CD8-positive, alpha-beta memory T cell (primary cell): ENCODE measurements at regions of chr13 and their contacts with region 1.

Region 1: DNA sequence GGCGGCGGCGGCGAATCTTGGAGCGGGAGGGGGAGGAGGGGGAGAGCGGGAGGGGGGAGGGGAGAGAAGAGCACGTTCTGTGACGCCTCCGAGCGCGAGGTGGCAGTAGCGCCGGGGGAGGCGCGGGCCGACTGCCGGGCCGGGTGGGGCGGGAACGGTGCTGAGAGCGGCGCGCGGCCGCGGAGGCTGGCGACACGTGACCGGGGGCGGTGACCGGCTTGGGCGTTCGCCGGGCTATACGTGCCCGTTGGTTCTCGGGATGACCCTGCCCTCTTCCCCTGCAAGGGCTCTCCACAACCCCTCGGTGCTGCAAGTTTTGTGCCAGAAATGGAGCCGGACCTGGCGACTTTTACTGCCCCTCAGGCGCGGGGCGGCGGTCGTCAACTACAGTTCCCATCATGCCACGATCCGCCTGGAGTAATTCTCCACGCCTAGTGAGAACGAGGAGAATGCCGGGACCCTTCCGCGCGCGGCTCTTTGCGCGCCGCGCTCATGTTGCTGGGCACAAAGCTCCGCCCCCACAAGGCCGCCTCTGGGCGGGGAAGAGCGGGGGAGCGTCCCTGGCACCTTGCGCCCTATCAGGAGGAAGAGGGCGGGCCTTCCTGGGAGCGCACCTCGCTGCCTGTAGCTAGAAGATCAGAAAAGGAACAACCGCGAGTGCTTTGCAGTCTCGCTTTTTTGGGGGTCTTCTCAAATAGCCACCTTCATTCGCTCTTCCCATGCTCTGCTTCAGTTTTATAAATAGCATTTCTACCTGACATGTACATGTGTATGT is at the start of gene KPNA3:
- DNase-seq: peak; percentile 91 to 97 (median 93)
- H3K4me3 ChIP-seq: peak within 1 kb of the TSS; percentile 91
- H3K4me3 Mint-ChIP-seq: peak within 1 kb of the TSS; percentile 96 to 99 (median 98)
- H3K27ac ChIP-seq: peak within 1 kb of the TSS; percentile 75
- H3K27ac Mint-ChIP-seq: peak within 1 kb of the TSS; percentile 95 to 99 (median 97)
- H3K4me1 ChIP-seq: peaks cover 34% of the 10 kb centered on the region
- H3K4me1 Mint-ChIP-seq: peaks cover 33 to 40% (median 38%) of the 10 kb centered on the region in 3 donors
- H3K27me3 ChIP-seq: no peaks in the 10 kb centered on the region
- H3K27me3 Mint-ChIP-seq: no peaks in the 10 kb centered on the region
- total RNA-seq, gene KPNA3: 62.7 to 62.8 TPM

Region 2: GRCh38 chr13:49690992-49691886 is 101.5 kb before region 1 on chr13 and contains the start of gene EBPL:
- CTCF ChIA-PET with region 1: interaction called, 8 read pairs
- POLR2A ChIA-PET with region 1: interaction called, 11 read pairs
- DNase-seq: peak; percentile 73 to 89 (median 80)
- H3K4me3 ChIP-seq: peak within 1 kb of the TSS; percentile 82
- H3K4me3 Mint-ChIP-seq: peak within 1 kb of the TSS; percentile 88 to 93 (median 91)
- H3K27ac ChIP-seq: peak within 1 kb of the TSS; percentile 26
- H3K27ac Mint-ChIP-seq: peak within 1 kb of the TSS; percentile 45 to 91 (median 76)
- H3K4me1 ChIP-seq: peaks cover 13% of the 10 kb centered on the region
- H3K4me1 Mint-ChIP-seq: peaks cover 28 to 40% (median 34%) of the 10 kb centered on the region in 3 donors
- H3K27me3 ChIP-seq: no peaks in the 10 kb centered on the region
- H3K27me3 Mint-ChIP-seq: no peaks in the 10 kb centered on the region
- total RNA-seq, gene EBPL: 47.9 to 51.6 TPM

Region 3: GRCh38 chr13:49731766-49732165 is 61.0 kb before region 1 on chr13:
- CTCF ChIA-PET with region 1: no interaction called
- POLR2A ChIA-PET with region 1: no interaction called
- DNase-seq: no peak
- H3K4me3 ChIP-seq: no peak overlapping the region
- H3K4me3 Mint-ChIP-seq: no peak overlapping the region
- H3K27ac ChIP-seq: no peak overlapping the region
- H3K27ac Mint-ChIP-seq: no peak overlapping the region
- H3K4me1 ChIP-seq: no peaks in the 10 kb centered on the region
- H3K4me1 Mint-ChIP-seq: peaks cover 0 to 5% (median 1%) of the 10 kb centered on the region in 3 donors
- H3K27me3 ChIP-seq: no peaks in the 10 kb centered on the region
- H3K27me3 Mint-ChIP-seq: no peaks in the 10 kb centered on the region

Region 4: DNA sequence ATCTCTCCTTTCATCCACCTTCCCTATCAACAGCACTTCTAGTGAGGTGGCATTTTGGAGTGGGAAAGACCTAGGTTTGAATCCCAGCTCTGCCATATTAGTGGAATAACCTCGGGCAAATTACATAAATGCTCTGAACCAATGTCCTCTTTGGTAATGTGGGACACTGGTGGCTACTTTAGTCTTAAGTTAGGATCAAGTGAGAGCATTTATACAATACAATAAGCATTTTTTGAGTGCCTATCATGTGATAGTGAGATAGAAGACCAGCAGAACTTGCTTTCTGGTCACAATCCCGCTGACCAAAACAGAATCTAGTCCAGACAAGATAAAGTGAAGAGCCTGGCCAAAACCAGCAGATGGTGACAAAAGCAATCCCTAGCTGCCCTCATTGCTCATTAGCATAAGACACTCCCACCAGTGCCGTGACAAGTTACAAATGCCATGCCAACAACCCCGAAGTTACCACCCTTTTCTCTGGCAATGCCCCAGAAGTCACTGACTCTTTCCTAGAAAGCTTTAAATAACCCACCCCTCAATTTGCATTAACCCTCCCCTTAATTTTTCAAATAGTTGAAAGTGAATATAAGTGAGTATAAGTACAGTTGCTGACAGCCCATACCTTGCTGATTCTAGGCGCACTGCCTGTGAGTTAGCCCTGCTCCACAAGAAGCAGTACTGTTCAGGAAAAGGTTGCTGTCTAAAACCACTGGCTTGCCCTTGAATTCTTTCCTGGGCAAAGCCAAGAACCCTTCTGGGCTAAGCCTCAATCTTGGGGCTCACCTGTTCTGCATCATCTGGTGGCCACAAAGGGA is 28.7 kb after region 1 on chr13:
- CTCF ChIA-PET with region 1: no interaction called
- POLR2A ChIA-PET with region 1: no interaction called
- DNase-seq: no peak
- H3K4me3 ChIP-seq: no peak overlapping the region
- H3K4me3 Mint-ChIP-seq: peak overlapping the region in 1 of 7 donors; percentile 11
- H3K27ac ChIP-seq: no peak overlapping the region
- H3K27ac Mint-ChIP-seq: no peak overlapping the region
- H3K4me1 ChIP-seq: no peaks in the 10 kb centered on the region
- H3K4me1 Mint-ChIP-seq: no peaks in the 10 kb centered on the region
- H3K27me3 ChIP-seq: no peaks in the 10 kb centered on the region
- H3K27me3 Mint-ChIP-seq: peaks cover 11 to 68% of the 10 kb centered on the region in 2 donors